GM23248 (cell line): ENCODE measurements at regions of chr11 and their contacts with region 1.

Region 1: DNA sequence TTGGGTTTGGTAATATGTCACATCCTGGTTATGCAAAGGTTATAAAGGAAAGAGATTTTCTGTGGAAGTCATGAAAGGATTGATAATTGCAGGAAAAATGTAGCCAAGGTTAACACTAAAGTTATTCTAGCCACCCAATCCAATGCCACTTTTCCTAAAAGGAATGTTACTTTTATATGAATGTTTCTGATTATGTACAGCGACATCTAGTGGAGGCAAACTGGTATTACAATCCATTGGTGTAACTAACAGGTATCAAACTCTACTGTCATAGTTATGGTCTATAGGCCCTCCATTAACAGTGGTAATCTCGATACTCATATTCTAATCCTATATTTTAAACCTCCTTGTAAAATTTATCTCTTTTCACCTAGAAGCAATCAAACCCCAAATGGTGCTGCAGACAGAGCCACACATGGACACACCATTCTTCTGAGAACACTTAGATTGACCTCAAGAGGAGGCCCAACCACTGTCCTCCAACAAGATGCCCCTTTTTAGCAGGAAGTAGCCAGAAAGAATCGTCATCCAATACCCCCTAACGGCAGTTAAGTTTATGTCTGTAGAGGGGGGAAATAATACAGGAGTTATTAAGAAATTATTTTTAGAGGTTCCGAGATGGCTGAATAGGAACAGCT is 74.9 kb upstream of the RAG2 start:
- DNase-seq: peak; percentile 52
- H3K4me3 ChIP-seq: no peak overlapping the region
- H3K27ac ChIP-seq: no peak overlapping the region
- H3K4me1 ChIP-seq: no peaks in the 10 kb centered on the region
- H3K27me3 ChIP-seq: no peaks in the 10 kb centered on the region

Region 2: DNA sequence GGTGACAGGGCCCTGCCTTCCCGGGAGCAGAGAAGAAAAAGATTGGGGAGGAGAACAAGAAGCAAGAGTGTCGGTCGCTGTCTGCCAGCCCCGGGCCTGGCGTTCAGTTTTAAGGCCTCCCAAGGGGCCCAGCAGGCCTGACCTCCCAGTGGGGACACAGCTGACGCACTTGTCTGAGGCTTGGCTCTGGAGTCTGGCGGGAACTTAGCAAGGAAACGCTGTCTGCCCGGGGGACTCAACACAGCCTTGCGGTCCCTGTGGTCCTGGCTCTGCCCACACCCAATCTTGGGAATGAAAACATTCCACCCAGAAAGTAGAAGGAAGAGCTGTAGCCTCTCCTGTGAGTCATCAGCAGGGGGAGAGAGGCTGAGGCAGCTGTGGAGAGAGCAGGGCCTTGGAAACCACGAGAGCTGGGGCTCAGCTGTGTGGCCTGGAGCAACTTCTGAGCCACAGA is 217.2 kb before region 1 on chr11:
- in situ Hi-C with region 1: no loop called
- DNase-seq: peak; percentile 98
- H3K4me3 ChIP-seq: peak overlapping the region; percentile 8; the same call in 1 of the 2 replicates
- H3K27ac ChIP-seq: peak overlapping the region; percentile 95
- H3K4me1 ChIP-seq: peaks cover 47% of the 10 kb centered on the region
- H3K27me3 ChIP-seq: no peaks in the 10 kb centered on the region

Region 3: DNA sequence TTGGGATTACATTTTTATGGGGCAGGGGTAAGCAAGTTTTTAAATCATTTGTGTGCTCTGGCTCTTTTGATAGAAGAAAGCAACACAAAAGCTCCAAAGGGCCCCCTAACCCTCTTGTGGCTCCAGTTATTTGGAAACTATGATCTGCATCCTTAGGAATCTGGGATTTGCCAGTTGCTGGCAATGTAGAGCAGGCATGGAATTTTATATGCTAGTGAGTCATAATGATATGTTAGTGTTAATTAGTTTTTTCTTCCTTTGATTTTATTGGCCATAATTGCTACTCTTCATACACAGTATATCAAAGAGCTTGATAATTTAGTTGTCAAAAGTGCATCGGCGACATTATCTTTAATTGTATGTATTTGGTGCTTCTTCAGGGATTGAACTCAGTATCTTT is 95.1 kb before region 1 on chr11:
- in situ Hi-C with region 1: loop called (anchors 10 kb)
- DNase-seq: peak; percentile 30
- H3K4me3 ChIP-seq: no peak overlapping the region
- H3K27ac ChIP-seq: no peak overlapping the region
- H3K4me1 ChIP-seq: peaks cover 5% of the 10 kb centered on the region; the same call in 1 of the 2 replicates
- H3K27me3 ChIP-seq: no peaks in the 10 kb centered on the region; the same call in 1 of the 2 replicates

Region 4: GRCh38 chr11:36605221-36606216 is 67.4 kb before region 1 on chr11:
- in situ Hi-C with region 1: no loop called
- DNase-seq: no peak
- H3K4me3 ChIP-seq: no peak overlapping the region
- H3K27ac ChIP-seq: no peak overlapping the region
- H3K4me1 ChIP-seq: no peaks in the 10 kb centered on the region
- H3K27me3 ChIP-seq: no peaks in the 10 kb centered on the region

Region 5: DNA sequence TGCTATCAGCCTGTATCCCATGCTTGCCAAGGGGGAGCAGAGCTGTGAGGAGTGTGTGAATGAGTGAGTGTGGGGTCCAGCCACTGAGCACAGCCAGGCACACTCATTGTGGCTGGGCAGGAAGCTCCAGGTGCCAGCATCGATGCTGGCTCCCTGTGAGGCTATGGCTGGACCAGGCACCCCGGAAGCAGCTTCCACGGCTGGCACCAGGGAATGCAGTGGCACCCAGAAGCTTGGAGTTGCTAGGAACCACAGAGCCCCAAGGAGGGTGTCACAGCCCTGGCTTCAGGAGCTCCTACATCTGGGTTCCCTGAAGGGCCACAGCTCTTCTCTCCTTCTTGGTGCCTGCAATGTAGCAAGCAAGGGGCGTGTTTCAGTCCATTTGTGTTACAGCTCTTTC is 551.0 kb after region 1 on chr11:
- in situ Hi-C with region 1: no loop called
- DNase-seq: no peak
- H3K4me3 ChIP-seq: no peak overlapping the region
- H3K27ac ChIP-seq: no peak overlapping the region
- H3K4me1 ChIP-seq: no peaks in the 10 kb centered on the region
- H3K27me3 ChIP-seq: no peaks in the 10 kb centered on the region